Prostate gland (tissue), 2 donors: ENCODE measurements at regions of chr19 and their contacts with region 1.

Region 1: GRCh38 chr19:9435279-9436268 is at the start of gene ZNF266:
- DNase-seq: peak; percentile 79
- H3K4me3 ChIP-seq: peak within 1 kb of the TSS; percentile 71 to 87
- H3K27ac ChIP-seq: peak within 1 kb of the TSS; percentile 87 to 89
- H3K4me1 ChIP-seq: peaks cover 3% of the 10 kb centered on the region
- H3K27me3 ChIP-seq: no peaks in the 10 kb centered on the region
- CTCF ChIP-seq: peak; percentile 71 to 90 (median 82)
- POLR2A ChIP-seq: peak; percentile 26
- total RNA-seq, gene ZNF266: 20.4 to 22.9 TPM

Region 2: GRCh38 chr19:9205501-9206113 is 230.0 kb before region 1 on chr19:
- intact Hi-C with region 1: loop called (anchors 10 kb)
- DNase-seq: peak; percentile 58
- H3K4me3 ChIP-seq: no peak overlapping the region
- H3K27ac ChIP-seq: no peak overlapping the region
- H3K4me1 ChIP-seq: no peaks in the 10 kb centered on the region
- H3K27me3 ChIP-seq: no peaks in the 10 kb centered on the region
- CTCF ChIP-seq: peak; percentile 55 to 79 (median 68)
- POLR2A ChIP-seq: no peak

Region 3: GRCh38 chr19:9323919-9324583 is 111.5 kb before region 1 on chr19 and contains the start of gene ZNF559:
- intact Hi-C with region 1: loop called (anchors 10 kb)
- DNase-seq: peak; percentile 89
- H3K4me3 ChIP-seq: peak within 1 kb of the TSS; percentile 71 to 81
- H3K27ac ChIP-seq: peak within 1 kb of the TSS; percentile 78 to 85
- H3K4me1 ChIP-seq: no peaks in the 10 kb centered on the region
- H3K27me3 ChIP-seq: no peaks in the 10 kb centered on the region
- CTCF ChIP-seq: peak in 2 of 4 experiments; percentile 44 to 50
- POLR2A ChIP-seq: peak; percentile 43
- total RNA-seq, gene ZNF559: 19.4 to 30.3 TPM

Region 4: DNA sequence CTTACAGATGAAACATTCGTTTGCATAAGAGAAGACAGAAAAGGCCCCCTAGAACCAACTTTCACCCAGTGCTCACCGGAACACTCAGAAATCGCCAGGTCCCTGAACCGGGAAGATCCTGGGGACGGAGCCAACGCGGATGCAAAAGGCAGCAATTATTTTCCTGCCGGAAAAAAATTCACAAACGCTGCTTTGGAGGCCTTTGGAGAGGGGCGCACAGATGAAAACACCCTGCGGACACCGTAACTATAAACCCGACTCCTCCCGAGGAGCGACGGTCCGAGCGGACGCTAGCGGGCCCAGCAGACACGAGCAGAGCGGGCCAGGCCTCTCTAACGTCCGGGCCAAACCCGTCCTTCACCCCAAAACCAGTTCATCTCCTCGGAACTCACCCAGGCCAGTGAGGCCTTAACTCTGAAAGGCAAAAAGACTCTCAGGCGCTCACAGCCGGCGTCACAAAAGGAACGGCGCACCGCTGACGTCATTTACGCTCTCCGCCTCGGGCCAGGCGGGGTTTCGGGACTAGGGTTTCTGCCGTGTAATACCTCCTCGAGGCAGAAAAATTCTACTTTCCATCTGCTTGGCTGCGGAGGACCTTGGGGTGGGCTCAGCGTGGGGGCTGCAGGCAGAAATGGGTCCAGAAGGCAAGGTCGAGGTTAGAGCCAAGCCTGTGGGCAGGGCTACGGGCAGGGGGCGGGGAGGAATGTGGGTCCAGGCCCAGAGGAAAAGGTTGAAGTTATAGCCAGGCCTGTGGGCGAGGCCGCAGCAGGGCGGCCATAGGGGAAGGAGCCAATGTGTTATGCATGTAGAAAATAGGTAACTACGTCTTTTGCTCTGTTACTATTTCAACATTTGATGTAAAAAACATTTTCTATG is 102.8 kb after region 1 on chr19 and contains the start of gene ZNF426:
- intact Hi-C with region 1: loop called (anchors 10 kb)
- DNase-seq: peak; percentile 73
- H3K4me3 ChIP-seq: peak within 1 kb of the TSS; percentile 50 to 63
- H3K27ac ChIP-seq: peak within 1 kb of the TSS; percentile 92 to 97
- H3K4me1 ChIP-seq: no peaks in the 10 kb centered on the region
- H3K27me3 ChIP-seq: no peaks in the 10 kb centered on the region
- CTCF ChIP-seq: no peak
- POLR2A ChIP-seq: peak; percentile 23
- total RNA-seq, gene ZNF426: 14.6 to 17.9 TPM

Region 5: GRCh38 chr19:9584073-9584833 is 148.7 kb after region 1 on chr19 and contains the start of gene ZNF121:
- intact Hi-C with region 1: no loop called
- DNase-seq: peak; percentile 76
- H3K4me3 ChIP-seq: peak within 1 kb of the TSS; percentile 74 to 83
- H3K27ac ChIP-seq: peak within 1 kb of the TSS; percentile 94 to 97
- H3K4me1 ChIP-seq: no peaks in the 10 kb centered on the region
- H3K27me3 ChIP-seq: no peaks in the 10 kb centered on the region
- CTCF ChIP-seq: peak in 1 of 4 experiments; percentile 24
- POLR2A ChIP-seq: peak; percentile 55
- total RNA-seq, gene ZNF121: 31.6 to 31.7 TPM